ENCODE measurements at regions of chr16 and their contacts with region 1.

Region 1: DNA sequence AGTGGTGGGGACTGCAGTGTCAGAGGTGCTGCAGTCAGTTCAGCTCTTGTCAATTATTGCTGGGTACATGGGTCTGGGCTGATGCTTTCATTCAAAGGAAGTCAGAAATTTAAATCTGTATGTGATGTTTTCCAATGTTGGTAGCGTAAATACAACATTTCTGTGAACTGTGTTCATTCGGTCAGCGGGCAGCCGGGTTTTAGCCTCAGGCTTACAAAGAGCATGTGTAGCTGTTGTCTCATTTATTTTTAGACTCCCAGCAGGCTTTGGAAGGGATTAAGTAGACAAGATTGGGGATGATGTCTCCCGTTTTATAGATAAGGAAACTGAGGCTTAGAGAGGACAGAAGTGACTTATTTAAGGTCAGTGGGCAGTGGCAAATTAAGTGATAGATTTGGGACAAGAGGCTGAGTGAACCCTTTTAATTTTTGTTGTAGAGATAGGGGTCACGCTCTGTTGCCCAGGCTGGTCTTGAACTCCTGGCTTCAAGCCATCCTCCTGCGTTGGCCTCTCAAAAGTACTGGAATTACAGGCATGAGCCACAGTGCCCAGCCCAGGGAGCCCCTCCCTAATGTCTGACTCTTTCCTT is 8.1 kb downstream of the AQP8 start:
- DNase-seq: no peak

Region 2: GRCh38 chr16:25051406-25052150 is 173.2 kb before region 1 on chr16:
- intact Hi-C with region 1: loop called in 1 of 2 experiments (anchors 2 kb)
- DNase-seq: no peak

Region 3: DNA sequence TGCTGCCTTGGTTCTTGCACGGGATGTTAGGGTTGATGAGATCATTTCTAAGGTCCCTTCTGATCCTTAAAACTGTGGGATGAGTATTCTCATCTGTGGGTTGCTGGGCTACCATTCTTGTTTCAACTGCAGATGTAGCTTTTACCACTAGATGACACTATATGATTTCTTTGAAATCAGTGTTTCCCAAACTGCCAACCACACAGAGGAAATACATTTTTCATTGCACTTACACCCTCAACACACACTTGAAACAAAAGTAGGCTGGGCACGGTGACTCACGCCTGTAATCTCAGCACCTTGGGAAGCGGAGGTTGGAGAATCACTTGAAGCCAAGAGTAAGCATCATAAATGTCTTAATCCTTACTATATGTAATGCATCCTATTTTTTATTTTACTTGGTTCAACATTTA is 98.0 kb before region 1 on chr16:
- intact Hi-C with region 1: no loop called
- DNase-seq: no peak